Posterior vena cava (tissue), 2 donors: ENCODE measurements at regions of chr2 and their contacts with region 1.

Region 1: DNA sequence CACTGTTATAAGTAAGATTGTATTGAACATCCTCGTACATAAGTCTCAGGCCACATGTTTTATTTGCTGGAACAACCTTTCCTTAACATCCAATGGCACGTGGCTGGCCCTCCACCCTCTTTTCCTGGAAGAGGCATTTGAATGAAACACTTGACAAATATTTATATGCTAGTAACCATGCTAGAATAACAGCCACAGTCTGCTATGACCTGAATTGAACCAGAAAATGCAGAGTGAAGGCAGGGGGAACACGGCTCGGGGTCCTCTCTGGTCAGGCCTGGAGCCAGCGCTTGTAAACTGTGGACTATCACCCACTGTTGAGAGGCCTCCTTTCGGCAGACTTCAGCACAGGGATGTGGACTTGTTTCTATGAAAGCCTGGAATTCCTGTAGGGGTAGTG is 198.2 kb upstream of the COPS8 start:
- DNase-seq: peak; percentile 91

Region 2: DNA sequence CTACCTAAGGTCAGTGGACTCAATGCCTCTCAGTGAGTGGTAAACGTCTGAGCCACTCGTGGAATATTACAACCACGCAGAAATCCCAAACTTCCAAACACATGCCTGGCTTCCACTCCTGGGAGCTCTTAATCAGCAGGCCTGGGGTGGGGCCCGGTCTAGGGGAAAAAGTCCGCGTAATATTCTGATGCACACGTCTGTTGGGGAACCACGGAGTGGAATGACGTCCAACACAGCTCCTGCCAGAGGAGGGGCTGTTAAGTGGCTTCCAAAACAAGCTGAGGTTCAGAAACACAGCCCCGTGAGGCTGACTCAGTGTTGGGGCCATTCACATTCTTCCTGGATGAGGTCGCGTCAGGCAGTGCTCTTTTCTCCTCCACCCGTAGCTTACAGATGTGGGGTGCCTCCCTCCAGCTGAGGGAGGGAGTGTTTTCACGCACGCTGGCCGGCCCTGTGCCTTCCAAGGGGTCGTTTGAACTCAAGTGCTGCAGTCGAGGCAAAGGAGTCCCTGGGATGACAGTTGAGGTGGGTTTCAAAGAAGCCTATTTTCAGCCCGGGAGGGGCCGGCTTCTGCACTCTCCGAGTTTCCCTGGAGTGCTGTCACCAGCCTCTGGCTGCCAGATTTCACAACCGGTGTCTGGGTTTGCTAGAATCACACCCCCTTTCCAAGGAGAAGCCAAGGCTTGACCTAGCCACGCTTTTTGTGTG is 244.8 kb before region 1 on chr2:
- intact Hi-C with region 1: loop called in 1 of 2 experiments (anchors 5 kb)
- DNase-seq: peak; percentile 97

Region 3: GRCh38 chr2:236833501-236834073 is 53.9 kb before region 1 on chr2:
- intact Hi-C with region 1: loop called in 1 of 2 experiments (anchors 10 kb)
- DNase-seq: no peak

Region 4: GRCh38 chr2:237998530-237998929 is 1111.0 kb after region 1 on chr2:
- intact Hi-C with region 1: loop called in 1 of 2 experiments (anchors 5 kb)
- DNase-seq: no peak